PC-9 (cell line): ENCODE measurements at regions of chr6 and their contacts with region 1.

Region 1: DNA sequence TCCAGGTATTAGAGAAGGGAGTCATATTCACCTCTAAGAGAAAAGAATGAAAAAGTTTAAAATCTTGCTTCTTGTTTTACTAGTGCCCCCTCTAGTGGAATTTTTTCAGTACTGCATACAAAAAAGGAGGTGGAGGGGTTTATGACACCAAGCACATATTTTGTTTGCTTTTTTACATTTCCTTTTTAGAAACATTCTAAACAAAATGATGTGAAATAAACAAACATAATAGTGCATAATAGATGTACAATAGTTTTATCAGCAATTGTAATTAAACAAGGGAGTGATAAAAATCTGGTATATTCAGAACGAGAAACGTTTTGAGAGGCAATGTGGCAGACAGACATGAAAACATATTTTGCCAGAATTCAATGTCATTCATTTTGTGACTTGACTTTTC is 111.0 kb upstream of the TFAP2D start:
- DNase-seq: no peak
- H3K4me3 ChIP-seq: no peak overlapping the region
- H3K27ac ChIP-seq: no peak overlapping the region
- H3K4me1 ChIP-seq: no peaks in the 10 kb centered on the region
- H3K27me3 ChIP-seq: no peaks in the 10 kb centered on the region
- CTCF ChIP-seq: peak; percentile 90

Region 2: DNA sequence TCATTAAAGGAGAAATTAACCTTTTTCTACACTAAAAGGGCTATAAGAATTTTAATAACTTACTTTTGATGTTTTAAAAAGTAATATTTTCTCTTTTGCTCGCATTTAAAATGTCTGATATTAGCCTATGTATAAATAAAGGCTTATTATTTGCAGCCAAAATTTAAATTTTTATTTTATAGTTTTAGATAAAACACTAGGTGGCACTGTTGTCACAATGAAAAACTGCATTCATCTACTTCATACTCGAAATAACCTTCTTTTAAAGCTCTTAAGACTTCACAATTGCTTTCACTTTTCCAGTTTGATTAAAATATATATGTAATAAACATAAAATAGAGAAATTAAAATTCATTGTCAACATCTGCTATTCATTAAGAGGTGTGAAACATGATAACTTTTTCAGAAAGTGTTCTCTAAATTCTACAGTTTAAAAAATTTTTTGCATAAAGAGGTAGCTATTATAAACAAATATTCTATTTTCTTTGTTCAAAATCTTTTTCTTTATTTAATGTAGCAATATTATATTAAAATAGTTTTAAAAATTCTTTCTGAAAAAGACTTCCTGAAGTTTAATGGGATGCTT is 473.8 kb before region 1 on chr6:
- CTCF ChIA-PET with region 1: no interaction called
- POLR2A ChIA-PET with region 1: no interaction called
- intact Hi-C with region 1: loop called (anchors 5 kb)
- DNase-seq: no peak
- H3K4me3 ChIP-seq: no peak overlapping the region
- H3K27ac ChIP-seq: no peak overlapping the region
- H3K4me1 ChIP-seq: no peaks in the 10 kb centered on the region
- H3K27me3 ChIP-seq: no peaks in the 10 kb centered on the region
- CTCF ChIP-seq: peak; percentile 79

Region 3: DNA sequence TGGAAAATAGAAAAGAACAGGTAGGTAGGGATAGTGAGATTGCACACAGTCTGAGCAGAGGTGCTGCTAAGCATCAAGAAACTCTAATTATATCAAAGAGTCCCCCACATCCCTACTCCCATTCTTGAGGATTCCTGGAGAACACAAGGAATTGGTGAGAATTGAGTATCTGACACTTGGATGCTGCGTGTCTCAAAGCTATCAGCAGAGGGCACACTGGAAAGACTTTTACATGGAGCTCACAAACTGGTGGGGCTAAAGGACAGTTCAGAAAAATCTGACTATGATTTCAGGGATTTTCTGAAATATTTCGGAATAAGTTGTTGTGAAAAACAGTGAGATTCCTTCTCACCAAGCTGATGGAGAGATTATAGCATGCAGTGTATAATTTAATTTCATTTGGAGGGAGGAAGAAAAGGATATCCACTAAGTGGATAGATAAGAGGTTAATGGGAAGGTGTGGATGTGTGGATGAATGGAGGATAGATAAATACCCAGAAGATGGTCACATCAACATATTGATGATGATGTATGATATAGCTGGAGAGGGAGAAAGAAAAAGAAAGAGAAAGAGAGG is 337.2 kb before region 1 on chr6:
- CTCF ChIA-PET with region 1: no interaction called
- POLR2A ChIA-PET with region 1: no interaction called
- intact Hi-C with region 1: loop called (anchors 5 kb)
- DNase-seq: no peak
- H3K4me3 ChIP-seq: no peak overlapping the region
- H3K27ac ChIP-seq: no peak overlapping the region
- H3K4me1 ChIP-seq: no peaks in the 10 kb centered on the region
- H3K27me3 ChIP-seq: no peaks in the 10 kb centered on the region
- CTCF ChIP-seq: peak; percentile 46; the same call in 1 of the 2 replicates